Head of caudate nucleus (tissue), 42 donors: ENCODE measurements at regions of chr9 and their contacts with region 1.

Region 1: GRCh38 chr9:107637421-107638420 is 148.2 kb upstream of the KLF4 start:
- DNase-seq: peak; percentile 40 to 91 (median 74)

Region 2: DNA sequence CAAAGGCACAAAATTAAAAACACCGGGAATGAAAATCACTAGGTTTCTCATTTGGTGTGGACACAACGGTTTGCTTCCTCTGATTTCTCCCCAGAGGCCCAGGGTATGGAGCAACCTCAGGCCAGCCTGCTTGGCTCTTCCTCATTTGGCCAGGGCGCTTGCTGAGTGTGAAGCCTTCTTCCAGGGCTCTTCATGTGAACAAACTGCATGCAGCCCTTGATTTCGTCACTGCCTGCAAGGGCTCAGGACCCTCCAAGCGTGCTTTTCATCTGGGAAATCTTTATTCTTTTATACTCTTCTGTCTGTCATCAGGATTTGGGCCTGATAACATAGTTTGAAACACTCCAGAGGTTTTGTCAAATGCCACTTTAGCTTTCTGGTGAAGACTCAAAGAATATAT is 25.6 kb before region 1 on chr9:
- intact Hi-C with region 1: no loop called
- DNase-seq: peak in 35 of 42 donors; percentile 9 to 72 (median 37)

Region 3: GRCh38 chr9:107684224-107684623 is 46.5 kb after region 1 on chr9:
- intact Hi-C with region 1: no loop called
- DNase-seq: no peak

Region 4: DNA sequence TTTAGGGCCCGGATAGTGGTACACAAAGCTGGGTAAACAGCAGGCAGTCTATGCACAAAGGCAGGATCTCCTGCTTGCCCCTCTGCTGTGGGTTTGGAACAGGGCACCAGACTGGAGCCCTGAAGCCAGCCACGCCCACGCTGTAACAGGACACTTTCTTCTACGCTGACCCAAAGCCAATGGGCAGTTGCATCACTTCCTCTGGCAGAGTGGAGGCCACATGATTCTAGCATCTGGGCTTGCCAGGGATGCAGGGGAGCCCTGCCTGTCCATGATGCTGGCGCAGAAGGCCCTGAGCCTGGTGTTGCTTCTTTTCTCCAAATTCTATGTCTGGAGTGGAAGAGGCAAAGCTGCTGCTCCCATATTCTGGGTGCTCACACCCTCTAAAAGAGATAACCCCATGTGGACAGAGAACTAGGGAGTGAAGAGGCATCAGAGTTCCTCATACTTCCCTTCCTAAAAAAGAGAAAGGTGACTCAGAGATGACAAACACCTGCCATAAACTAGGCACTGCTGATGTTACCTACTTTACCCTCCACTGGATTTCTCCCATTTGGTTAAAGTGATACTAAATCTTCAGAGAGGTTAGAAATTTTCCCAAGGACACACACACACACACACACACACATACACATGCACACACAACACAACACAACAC is 112.2 kb after region 1 on chr9:
- intact Hi-C with region 1: loop called (anchors 5 kb)
- DNase-seq: peak; percentile 70 to 95 (median 86)